ENCODE measurements at regions of chr2 and their contacts with region 1.

Region 1: GRCh38 chr2:161273038-161273760 is 35.0 kb upstream of the PSMD14 start:
- H3K4me3 Mint-ChIP-seq: no peak overlapping the region
- H3K27ac Mint-ChIP-seq: no peak overlapping the region
- H3K4me1 Mint-ChIP-seq: no peaks in the 10 kb centered on the region
- H3K27me3 Mint-ChIP-seq: no peaks in the 10 kb centered on the region

Region 2: GRCh38 chr2:161063157-161063954 is 209.8 kb before region 1 on chr2:
- intact Hi-C with region 1: loop called (anchors 5 kb)
- H3K4me3 Mint-ChIP-seq: no peak overlapping the region
- H3K27ac Mint-ChIP-seq: peak overlapping the region; percentile 10
- H3K4me1 Mint-ChIP-seq: peaks cover 6% of the 10 kb centered on the region
- H3K27me3 Mint-ChIP-seq: peaks cover 2% of the 10 kb centered on the region

Region 3: DNA sequence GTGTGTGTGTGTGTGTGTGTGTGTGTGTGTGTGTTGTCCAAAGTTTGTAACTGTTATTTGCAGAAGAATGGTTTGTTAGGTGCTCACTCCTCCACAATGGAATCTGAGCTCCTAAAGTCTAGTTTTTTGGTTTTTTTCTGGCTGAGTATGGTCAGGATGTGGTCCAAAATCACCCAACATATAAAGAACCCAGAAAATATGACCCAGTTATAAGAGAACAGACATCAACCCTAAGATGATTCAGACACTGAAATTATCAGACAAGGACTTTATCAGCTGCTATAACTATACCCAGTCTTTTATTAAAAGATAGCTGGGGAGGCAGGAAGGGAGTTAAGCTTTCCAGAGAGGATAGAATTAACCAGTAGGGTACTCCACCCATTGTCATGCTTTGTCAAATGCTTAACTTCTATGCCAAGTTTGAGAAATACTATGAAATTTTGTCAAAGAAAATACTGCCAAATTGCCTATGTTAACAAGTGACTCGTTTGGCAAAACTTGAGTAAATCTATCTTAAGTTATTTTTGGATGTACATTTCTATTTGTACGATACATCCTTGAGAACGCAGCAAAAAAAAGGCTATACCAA is 55.5 kb before region 1 on chr2:
- intact Hi-C with region 1: loop called (anchors 2 kb)
- H3K4me3 Mint-ChIP-seq: no peak overlapping the region
- H3K27ac Mint-ChIP-seq: no peak overlapping the region
- H3K4me1 Mint-ChIP-seq: peaks cover 12% of the 10 kb centered on the region
- H3K27me3 Mint-ChIP-seq: no peaks in the 10 kb centered on the region